Activated CD8-positive, alpha-beta T cell treated with anti-CD3 and anti-CD28 coated beads, Interleukin-2, amount 10 ng/mL, durations not matched to agents 7 days and 5 days (primary cell): ENCODE measurements at regions of chr5 and their contacts with region 1.

Region 1: DNA sequence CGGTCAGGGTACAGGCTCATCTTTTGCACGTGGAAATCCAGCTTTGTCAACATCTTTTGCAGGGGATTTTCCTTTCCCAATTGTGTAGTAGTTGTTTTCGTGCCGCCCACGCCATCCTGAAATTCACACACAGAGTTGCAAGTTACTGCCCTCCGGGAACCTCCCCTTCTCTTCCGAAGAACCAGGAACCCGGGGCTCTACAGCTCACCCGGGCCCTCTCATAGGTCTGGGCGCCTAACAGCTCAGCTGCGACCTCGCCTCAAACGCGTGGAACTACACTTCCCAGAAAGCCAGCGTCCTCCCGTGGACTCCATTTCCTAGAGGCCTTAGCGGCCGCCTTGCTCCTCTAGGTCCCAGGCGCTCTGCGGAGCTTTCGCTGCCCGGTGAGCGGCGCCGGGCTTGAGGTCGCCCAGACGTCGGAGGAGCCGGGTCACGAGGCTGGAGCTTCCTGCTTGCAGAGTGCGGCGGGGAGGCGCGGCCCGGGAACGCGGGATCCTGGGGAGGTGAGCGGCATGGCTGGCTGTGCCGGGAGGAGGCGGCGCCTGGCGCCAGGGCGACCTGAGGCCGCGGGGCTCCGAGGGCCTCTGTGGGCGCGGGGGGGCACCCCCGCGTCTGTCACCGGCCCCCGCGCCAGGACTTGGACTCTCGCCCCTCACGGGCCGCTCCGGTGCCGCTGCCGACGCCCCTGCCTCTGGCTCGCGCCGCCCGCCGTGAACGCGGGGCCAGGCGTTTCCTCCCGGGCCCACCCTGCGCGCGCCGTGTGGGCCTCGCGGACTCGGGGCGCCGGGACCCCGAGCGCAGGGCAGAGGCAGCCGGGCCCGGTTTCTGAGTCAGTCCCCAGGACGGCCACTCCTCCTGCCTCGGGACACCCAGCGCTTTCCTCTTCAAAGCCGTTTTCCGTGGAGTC is at the start of gene ZNF354B:
- DNase-seq: peak; percentile 88
- ATAC-seq: peak; percentile 96
- H3K4me3 Mint-ChIP-seq: peak within 1 kb of the TSS; percentile 88
- H3K27ac Mint-ChIP-seq: peak within 1 kb of the TSS; percentile 77
- H3K4me1 Mint-ChIP-seq: peaks cover 21% of the 10 kb centered on the region
- H3K27me3 Mint-ChIP-seq: no peaks in the 10 kb centered on the region
- total RNA-seq, gene ZNF354B: 12.4 to 13.7 TPM

Region 2: DNA sequence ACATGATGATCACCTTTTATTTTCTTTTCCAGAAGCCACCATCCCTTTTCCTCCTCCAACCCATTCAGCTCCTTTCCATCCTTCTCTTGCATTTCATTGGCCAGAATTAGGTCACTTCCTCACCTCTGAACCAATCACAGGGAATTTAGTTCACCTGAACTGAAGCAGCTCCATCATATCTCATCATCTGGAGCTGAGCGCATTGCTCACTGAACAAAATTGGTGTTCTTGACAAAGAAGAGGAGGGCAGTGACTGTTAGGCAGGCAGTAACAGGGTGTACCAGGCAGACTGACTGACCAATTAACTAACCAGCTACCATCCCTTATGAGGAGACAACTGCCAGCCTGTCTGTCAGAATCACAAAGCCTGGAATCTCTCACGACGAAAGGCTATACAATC is 127.6 kb before region 1 on chr5:
- CTCF ChIA-PET with region 1: interaction called, 11 read pairs
- POLR2A ChIA-PET with region 1: no interaction called
- DNase-seq: no peak
- ATAC-seq: no peak
- H3K4me3 Mint-ChIP-seq: no peak overlapping the region
- H3K27ac Mint-ChIP-seq: no peak overlapping the region
- H3K4me1 Mint-ChIP-seq: peaks cover 9% of the 10 kb centered on the region
- H3K27me3 Mint-ChIP-seq: peaks cover under 1% of the 10 kb centered on the region

Region 3: DNA sequence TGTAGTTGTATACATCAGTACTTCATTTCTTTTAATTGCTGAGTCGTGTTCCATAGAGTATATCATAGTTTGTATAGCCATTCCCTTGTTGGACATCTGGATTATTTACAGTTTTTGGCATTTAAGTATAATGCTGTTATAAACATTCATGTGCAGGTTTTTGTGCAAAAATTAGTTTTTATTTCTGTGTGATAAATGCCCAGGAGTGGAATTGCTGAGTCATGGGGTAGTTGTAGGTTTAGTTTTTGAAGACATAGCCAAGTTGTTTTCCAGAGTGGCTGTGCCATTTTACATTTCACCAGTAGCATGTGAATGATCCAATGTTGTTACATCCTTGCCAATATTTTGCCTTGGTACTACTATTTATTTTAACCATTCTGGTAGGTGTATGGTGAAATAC is 12.4 kb after region 1 on chr5:
- CTCF ChIA-PET with region 1: no interaction called
- POLR2A ChIA-PET with region 1: no interaction called
- DNase-seq: no peak
- ATAC-seq: no peak
- H3K4me3 Mint-ChIP-seq: no peak overlapping the region
- H3K27ac Mint-ChIP-seq: no peak overlapping the region
- H3K4me1 Mint-ChIP-seq: no peaks in the 10 kb centered on the region
- H3K27me3 Mint-ChIP-seq: no peaks in the 10 kb centered on the region